ENCODE measurements at regions of chr11 and their contacts with region 1.

Region 1: DNA sequence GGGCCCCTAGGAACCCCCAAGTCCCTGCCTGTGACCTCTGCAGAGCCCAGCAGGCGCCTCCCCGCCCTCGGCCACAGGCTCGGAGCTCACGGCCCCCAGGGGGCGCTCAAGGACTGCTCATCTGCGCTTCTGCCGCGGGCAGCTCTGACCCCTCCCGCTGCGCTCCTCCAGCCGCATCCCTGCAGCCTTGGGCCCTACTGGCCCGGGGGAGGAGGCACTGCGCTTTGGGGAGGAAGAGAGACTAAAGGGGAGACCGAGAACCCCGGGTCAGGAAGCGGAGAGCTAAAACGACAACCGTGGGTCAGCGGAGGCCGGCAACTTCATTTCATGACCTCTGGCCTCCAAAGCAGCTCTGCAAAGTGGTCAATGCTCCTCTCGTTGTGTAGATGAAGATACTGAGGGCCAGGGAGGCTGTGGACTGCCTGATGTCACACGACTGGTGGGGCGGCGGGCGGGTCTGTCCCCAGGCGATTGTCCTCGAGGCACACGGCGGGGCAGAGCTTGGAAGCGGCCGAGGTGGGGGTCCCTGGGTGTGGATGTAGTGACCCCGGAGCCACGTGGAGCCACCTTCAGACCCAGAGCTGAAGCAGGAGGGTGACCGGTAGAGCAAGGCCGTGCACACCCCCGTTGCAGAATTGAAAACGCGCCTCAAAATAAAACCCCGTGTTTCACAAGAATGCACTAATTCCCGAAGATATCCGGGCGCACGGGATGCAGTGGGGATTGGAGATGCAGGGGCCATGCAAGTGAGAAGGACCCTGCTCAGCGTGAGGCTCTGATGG is 2.7 kb upstream of the KRTAP5-6 start:
- DNase-seq: peak; percentile 83
- H3K4me3 Mint-ChIP-seq: no peak overlapping the region
- H3K27ac Mint-ChIP-seq: no peak overlapping the region
- H3K4me1 Mint-ChIP-seq: peaks cover 2% of the 10 kb centered on the region
- H3K27me3 Mint-ChIP-seq: peaks cover 72% of the 10 kb centered on the region

Region 2: DNA sequence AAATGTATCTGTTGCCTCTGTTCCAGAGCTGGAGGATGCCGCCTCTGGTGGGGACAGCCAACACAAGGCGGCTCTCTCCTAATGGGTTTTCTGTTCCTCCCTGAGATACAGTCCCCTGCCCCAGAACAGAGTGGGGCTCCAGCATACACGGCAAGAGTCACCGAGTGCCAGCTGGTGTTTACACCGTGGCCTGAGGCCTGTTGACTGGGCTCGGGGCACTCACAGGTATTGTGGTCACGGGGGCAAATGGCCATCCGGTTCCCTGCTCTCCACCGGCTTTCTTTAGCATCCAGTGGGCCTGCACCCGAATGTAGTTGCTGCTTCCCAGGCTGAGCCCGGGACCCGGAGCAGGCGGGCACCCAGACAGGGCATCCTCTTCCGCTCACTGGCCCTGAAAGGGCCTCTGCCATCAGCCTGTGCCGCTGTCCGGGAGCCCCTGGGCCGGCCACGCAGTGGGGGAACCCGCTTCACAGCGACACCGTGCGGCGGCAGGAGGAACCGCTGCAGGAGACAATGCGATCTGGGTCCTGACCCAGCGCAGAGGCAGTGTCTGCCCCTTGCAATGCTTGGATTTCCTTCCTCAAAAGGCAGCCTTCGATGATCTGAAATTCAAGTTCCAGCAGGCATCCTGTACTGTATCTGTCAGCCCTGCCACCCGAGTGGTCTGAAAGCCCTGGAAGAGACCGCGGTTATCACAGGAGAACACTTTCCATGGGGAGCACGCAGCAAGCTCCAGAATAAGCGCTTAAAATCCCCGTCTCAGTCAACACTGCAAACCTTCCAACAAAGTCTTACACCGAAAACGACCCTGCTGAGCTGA is 65.5 kb before region 1 on chr11:
- CTCF ChIA-PET with region 1: no interaction called
- DNase-seq: peak; percentile 69
- H3K4me3 Mint-ChIP-seq: no peak overlapping the region
- H3K27ac Mint-ChIP-seq: no peak overlapping the region
- H3K4me1 Mint-ChIP-seq: no peaks in the 10 kb centered on the region
- H3K27me3 Mint-ChIP-seq: peaks cover 69% of the 10 kb centered on the region

Region 3: GRCh38 chr11:1682225-1682905 is 11.9 kb before region 1 on chr11:
- CTCF ChIA-PET with region 1: interaction called, 15 read pairs
- DNase-seq: no peak
- H3K4me3 Mint-ChIP-seq: no peak overlapping the region
- H3K27ac Mint-ChIP-seq: no peak overlapping the region
- H3K4me1 Mint-ChIP-seq: no peaks in the 10 kb centered on the region
- H3K27me3 Mint-ChIP-seq: peaks cover 11% of the 10 kb centered on the region

Region 4: GRCh38 chr11:1765871-1766718 is 71.8 kb after region 1 on chr11:
- CTCF ChIA-PET with region 1: interaction called, 10 read pairs
- DNase-seq: peak; percentile 33
- H3K4me3 Mint-ChIP-seq: no peak overlapping the region
- H3K27ac Mint-ChIP-seq: no peak overlapping the region
- H3K4me1 Mint-ChIP-seq: peaks cover 21% of the 10 kb centered on the region
- H3K27me3 Mint-ChIP-seq: peaks cover 12% of the 10 kb centered on the region

Region 5: DNA sequence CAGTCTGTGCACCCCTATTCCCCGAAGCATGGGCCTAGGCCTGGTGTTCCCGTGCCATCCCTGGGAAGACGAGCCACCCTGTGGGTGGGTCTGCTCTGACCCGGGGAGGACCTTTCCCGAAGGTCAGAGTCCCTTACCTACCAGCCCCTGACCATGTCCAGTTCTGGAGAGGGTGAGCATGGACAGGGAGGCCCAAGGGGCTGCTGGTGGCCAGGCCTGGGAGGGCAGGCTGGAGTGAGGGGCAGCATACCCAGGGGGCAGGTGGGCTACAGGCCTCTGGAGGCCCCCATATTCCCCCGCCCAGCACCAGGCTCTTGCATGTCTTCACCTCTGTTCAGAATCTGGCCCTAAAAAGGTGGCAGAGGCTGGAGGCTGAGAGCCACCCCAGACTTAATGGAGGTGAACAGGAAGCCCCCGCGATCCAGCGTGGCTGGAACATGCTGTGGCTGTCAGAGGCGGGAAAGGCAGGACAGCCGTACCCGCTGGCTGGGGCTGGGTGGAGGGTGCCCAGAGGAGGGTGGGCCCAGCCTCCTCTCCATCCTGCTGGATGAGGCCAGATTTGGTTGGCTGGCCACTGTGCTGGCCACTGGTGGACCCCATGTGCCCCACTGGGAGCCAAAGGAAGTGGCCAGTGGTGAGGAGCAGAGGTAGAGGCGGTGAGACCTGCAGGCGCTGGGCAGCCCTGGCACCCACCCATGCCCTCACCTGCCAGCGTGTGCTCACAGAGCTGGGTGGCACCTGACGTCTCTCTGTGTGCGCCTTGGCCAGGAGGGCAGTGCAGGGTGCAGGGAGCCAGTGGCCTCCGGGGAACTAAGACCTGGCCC is 129.4 kb after region 1 on chr11:
- CTCF ChIA-PET with region 1: interaction called, 341 read pairs
- DNase-seq: no peak
- H3K4me3 Mint-ChIP-seq: no peak overlapping the region
- H3K27ac Mint-ChIP-seq: no peak overlapping the region
- H3K4me1 Mint-ChIP-seq: no peaks in the 10 kb centered on the region
- H3K27me3 Mint-ChIP-seq: peaks cover 13% of the 10 kb centered on the region

Region 6: DNA sequence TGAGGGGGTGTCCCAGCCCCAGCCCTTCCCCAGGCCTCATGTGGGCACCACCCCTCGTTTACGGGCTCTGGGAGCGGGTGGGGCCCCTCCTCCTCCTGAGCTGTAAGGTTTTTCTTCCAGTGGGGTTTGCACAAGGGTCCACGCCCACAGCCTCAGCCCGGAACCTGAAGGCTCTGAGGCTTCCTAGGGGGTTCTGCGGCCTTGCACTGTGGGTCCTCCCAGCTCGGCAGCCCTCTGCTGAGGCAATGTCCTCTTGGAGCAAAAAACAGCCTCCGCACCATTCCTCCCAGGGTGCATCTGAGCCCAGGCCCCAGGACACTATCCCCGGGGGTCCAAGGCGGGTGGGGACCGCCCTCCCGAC is 289.3 kb after region 1 on chr11:
- CTCF ChIA-PET with region 1: no interaction called
- DNase-seq: no peak
- H3K4me3 Mint-ChIP-seq: no peak overlapping the region
- H3K27ac Mint-ChIP-seq: no peak overlapping the region
- H3K4me1 Mint-ChIP-seq: no peaks in the 10 kb centered on the region
- H3K27me3 Mint-ChIP-seq: no peaks in the 10 kb centered on the region

Region 7: DNA sequence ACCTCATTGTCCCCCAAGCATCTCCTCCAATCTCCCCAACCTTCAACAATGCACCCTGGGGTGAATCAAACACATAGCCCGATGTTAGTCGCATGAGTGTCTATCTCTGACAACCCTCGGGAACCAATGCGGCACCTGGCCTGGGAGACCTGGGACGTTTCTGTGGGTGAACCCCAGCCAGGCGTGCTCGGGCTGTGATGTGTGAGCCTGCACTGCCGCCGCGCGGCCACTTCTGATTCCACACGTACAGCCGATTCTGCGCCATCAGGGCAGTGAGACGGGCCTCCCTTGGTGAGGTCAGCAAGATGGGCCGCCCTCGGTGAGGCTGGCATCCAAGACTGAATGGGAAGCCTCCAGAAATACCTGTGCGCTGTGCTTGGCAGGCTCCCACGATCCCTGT is 308.6 kb after region 1 on chr11:
- CTCF ChIA-PET with region 1: interaction called, 38 read pairs
- DNase-seq: no peak
- H3K4me3 Mint-ChIP-seq: no peak overlapping the region
- H3K27ac Mint-ChIP-seq: no peak overlapping the region
- H3K4me1 Mint-ChIP-seq: no peaks in the 10 kb centered on the region
- H3K27me3 Mint-ChIP-seq: no peaks in the 10 kb centered on the region

Measured in activated naive CD4-positive, alpha-beta T cell treated with anti-CD3 and anti-CD28 coated beads, Interleukin-2, amount 10 ng/mL, durations not matched to agents 7 days and 5 days (primary cell).